ENCODE measurements at regions of chr16 and their contacts with region 1.

Region 1: DNA sequence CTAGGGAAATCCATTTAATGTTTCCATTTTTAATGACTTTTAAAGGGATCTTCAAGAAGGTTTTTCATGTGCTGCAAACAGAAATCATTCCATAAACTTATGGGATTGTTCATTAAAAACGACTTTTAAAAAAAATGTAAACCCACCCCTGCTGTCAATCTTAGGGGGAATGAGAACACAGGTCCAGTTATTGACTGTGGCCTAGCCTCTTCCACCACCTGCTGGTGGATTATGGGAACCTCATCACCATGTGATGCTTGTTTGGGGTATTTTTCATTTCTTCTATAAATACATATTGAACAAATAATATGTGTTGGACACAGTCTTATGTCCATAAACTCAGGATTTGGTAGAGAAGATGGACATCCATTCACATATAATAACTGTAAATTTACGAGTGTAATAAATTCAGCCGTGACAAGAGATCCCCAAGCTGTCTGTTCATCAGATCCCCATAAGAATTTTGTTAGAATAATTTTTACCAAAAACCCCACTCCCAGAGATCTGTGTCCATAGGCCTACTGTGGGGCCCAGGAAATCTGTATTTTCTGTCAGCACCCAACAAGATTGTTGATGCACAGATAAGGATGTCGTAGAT is 42.0 kb upstream of the TMC5 start:
- DNase-seq: peak; percentile 75
- CTCF ChIP-seq: peak; percentile 79

Region 2: DNA sequence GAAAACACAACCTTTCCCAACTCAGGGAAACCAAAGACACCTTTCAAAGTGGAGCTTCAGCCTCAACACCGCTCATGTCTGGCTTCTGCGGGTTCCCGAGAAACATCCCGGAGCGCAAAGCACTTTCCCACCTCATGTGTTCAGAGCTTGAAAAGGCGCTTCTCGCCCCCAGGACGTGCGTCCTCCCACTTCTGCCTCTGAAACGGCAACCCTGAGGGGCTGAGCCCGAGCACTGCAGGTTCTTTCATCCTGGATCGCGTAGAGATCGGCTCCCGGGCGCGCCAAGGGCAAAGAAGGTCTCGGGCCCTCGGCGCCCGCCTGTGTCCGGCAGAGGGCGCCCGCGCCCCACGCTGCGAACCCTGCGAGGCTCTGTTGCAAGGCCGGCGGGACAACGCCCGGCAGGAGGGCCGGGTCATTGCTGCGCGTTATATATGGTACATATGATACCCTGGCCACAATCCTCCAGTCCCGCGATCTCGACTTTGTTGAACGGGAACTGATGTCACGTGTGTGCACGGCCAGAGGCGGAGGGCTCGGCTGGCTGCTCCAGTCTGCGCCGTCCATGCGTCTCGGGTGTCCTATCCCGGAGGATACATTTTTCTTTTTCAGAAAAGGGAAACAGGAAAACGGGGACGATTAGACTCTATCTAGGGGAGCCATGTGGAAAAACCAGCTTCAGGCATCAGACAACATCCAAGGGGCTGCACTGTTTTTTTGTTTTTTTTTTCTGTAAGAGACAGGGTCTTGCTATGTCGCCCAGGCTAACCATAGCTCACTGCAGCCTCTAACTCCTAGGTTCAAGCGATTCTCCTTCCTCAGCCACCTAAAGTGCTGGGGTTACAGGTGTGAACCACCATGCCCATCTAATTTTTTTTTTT is 289.1 kb before region 1 on chr16:
- in situ Hi-C with region 1: loop called (anchors 5 kb)
- DNase-seq: peak; percentile 83
- CTCF ChIP-seq: peak; percentile 99

Region 3: DNA sequence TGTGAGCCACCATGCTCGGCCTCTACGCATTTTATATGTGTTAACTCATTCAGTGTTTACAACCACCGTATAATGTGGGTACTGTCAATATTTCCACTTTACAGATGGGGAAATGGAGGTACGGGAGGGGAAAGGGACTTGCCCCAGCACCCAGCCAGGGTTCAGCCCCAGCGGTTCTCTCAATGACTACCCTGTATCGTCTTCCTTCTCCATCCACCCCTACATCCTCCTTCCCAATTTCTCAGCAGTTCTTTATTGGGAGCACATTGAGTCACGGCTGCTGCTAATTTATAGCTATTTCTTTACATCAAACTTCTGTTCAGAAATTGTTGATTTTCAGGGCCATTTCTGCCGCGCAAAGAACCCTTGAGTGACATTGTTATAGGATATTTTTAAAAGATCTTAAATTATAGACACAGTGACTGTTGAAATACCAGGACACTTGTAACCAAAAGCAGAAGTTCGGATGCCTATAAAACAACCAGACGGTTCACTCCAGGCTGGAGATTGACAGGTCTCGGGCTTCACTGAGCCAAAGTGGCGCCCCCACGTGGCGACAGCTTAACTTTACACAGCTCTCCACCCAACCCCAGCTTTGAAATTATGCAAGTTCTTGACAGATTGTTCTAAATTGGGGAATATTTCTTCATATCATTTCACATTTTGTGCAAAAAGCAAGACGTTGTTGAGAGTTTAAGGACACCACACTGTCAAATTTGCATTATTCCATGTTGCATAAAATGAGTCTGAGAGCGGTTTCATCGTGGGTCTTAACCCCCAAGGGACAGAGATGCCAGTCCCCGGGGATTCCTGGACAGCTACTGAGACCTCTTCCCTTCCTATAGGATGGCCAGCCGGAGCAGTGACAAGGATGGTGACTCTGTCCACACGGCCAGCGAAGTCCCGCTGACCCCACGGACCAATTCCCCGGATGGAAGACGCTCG is 195.8 kb before region 1 on chr16:
- in situ Hi-C with region 1: loop called (anchors 10 kb)
- DNase-seq: peak; percentile 84
- CTCF ChIP-seq: peak; percentile 82

Region 4: DNA sequence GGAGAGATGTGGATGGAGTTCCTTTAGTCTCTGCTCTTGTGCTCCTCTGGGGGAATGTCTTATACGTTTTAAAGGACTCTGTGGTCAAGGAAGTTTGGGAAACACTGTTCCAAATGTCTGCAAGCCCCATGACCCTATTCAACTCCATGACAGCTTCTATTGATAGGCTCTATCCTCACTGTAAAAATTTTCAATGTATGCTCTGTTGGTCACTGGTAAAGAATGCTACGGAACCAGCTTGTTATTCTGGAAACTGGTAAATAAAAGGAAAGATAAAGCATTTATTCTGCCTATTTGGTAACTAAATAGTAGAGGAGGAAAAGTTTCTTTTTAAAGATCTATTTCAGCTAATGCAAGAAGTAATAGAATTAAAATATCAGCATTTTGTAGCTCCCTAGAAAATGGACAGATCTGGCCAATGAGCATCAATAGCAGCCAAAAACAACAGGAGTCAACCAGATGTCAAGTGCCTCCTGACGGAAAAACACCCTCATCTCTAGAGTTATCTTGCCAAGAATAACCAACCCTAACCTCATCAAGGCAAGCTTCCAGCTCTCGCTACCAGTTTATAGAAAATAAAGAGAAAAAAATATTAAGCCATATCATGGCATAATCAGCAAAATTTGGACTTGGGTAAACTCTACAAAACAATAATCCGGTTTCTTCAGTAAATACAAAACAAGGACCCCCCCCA is 130.1 kb after region 1 on chr16:
- in situ Hi-C with region 1: no loop called
- DNase-seq: no peak
- CTCF ChIP-seq: no peak

Region 5: DNA sequence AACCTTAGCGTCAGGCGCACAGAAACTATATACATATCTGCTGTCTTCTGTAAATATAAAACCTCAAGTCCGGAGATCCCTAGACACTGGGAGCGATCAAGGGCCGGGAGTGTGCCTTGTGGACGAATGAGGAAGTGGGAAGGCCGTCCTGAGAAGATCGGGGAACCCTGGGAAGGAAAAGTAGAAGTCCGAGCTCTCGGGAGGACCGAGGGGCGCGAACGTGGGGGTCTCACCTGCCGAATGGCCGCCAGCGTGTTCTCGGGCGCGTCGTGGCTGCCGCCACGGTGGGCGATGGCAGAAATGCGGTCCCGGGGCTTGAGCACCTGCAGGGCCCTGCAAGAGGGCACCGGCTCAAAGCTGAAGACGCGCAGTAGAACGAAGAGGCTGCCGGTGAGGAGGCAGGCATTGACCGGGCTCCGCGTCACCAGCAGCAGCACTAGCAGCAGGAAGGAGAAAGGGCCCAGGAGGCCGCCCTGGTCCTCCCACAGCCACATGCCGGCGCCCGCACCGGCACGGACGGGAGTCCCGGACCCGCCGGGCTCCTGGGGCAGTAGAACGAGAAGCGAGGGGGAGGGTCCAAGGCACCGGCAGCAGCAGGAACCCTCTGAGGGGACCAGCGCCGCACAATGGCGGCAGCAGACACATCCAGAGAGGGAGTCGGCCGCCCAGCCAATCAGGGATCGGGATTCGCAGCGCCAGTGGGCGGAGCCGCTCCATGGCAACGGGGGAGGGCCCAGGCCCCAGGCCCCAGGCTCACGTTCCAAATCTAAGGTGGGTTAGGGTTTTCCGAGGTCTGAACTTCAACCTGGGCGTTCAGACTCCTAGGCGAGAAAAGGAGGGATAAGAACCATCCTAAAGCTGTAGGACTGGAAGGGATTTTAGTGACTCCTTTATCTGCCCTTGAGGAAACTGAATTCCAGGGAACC is 146.1 kb after region 1 on chr16 and contains the start of gene GDE1:
- in situ Hi-C with region 1: no loop called
- DNase-seq: peak; percentile 93
- CTCF ChIP-seq: peak; percentile 57